Activated B cell treated with CpG ODN at 0.5 μM for 24 hours (primary cell): ENCODE measurements at regions of chr6 and their contacts with region 1.

Region 1: GRCh38 chr6:33271458-33272274 is at the starts of genes RPS18 and VPS52:
- DNase-seq: peak; percentile 79
- ATAC-seq: peak; percentile 84
- H3K4me3 Mint-ChIP-seq: peak within 1 kb of the TSS; percentile 100
- H3K27ac Mint-ChIP-seq: peak within 1 kb of the TSS; percentile 100
- H3K4me1 Mint-ChIP-seq: peaks cover 59% of the 10 kb centered on the region
- H3K27me3 Mint-ChIP-seq: no peaks in the 10 kb centered on the region
- CTCF ChIP-seq: no peak
- total RNA-seq, gene RPS18: 4,710 and 5,877 TPM in 2 replicates
- total RNA-seq, gene VPS52: 82.0 and 97.2 TPM in 2 replicates

Region 2: DNA sequence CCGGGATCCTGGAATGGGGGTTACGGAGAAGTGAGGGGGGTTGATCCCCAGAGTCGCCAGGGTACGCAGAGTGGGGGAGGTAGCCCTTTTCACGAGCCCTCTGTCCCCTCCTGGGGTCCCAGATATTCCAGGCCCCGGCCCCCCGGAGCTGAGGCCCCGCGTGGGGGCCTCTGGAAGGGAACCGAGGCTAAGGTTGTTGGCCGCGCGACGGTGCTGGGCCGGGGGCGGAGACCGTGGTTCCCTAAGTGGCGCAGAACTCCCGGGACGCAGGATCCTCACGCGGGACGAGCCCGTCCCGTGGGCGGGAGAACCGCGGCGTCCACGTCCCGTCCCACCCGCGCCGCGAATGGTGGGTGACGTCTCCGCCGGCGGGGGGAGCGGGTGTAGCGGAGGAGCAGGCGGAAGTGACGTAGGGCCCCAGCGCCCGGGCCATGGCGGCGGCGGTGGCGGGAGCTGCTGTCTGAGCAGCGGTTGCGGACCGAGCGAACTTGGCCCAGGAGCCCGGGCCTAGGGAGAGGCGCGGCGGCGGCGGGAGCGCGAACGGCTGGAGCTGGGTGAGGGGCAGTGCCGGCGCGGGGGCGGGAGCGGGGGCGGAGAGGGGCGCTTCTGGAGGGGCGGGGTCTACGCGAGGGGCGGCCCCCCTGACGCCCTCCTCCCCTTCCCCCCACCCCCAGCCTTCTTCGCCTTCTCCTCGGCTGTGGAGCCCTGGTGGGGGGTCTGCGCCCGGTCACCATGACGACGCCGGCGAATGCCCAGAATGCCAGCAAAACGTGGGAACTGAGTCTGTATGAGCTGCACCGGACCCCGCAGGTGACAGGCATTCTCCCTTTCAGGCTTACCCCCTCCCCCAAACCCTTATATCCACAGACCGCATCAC is 63.3 kb before region 1 on chr6 and contains the start of gene RING1:
- CTCF ChIA-PET with region 1: no interaction called
- POLR2A ChIA-PET with region 1: interaction called, 38 read pairs
- intact Hi-C with region 1: loop called (anchors 1 kb)
- DNase-seq: peak; percentile 88
- ATAC-seq: peak; percentile 51
- H3K4me3 Mint-ChIP-seq: peak within 1 kb of the TSS; percentile 87
- H3K27ac Mint-ChIP-seq: peak within 1 kb of the TSS; percentile 82
- H3K4me1 Mint-ChIP-seq: peaks cover 45% of the 10 kb centered on the region
- H3K27me3 Mint-ChIP-seq: peaks cover 13% of the 10 kb centered on the region
- CTCF ChIP-seq: no peak
- total RNA-seq, gene RING1: 41.7 and 43.8 TPM in 2 replicates

Region 3: GRCh38 chr6:33288921-33289748 is 17.5 kb after region 1 on chr6 and contains the starts of genes PFDN6 and WDR46:
- CTCF ChIA-PET with region 1: interaction called, 21 read pairs
- POLR2A ChIA-PET with region 1: interaction called, 80 read pairs
- intact Hi-C with region 1: loop called (anchors 1 kb)
- DNase-seq: peak; percentile 66
- ATAC-seq: peak; percentile 94
- H3K4me3 Mint-ChIP-seq: peak within 1 kb of the TSS; percentile 100
- H3K27ac Mint-ChIP-seq: peak within 1 kb of the TSS; percentile 95
- H3K4me1 Mint-ChIP-seq: peaks cover 48% of the 10 kb centered on the region
- H3K27me3 Mint-ChIP-seq: no peaks in the 10 kb centered on the region
- CTCF ChIP-seq: no peak
- total RNA-seq, gene PFDN6: 82.8 and 95.1 TPM in 2 replicates
- total RNA-seq, gene WDR46: 114 and 117 TPM in 2 replicates

Region 4: DNA sequence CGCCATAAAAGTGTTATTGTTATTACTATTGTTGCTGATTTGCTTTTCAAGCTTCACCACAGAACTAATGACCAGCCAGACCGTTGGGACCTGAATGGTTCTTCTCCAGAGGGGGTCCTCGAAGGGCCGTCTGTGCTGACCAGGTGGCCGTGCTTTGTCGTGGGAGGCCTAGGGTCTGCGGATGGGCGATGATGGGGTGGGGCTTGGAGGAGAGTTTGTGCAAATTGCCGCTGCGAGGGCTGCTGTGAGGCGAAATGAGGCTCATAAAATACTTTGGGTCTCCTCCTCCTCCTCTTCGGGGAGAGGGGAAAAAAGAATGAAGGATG is 51.9 kb after region 1 on chr6:
- CTCF ChIA-PET with region 1: no interaction called
- POLR2A ChIA-PET with region 1: interaction called, 41 read pairs
- intact Hi-C with region 1: loop called (anchors 1 kb)
- DNase-seq: peak; percentile 38
- ATAC-seq: no peak
- H3K4me3 Mint-ChIP-seq: peak overlapping the region; percentile 95
- H3K27ac Mint-ChIP-seq: peak overlapping the region; percentile 93
- H3K4me1 Mint-ChIP-seq: peaks cover 61% of the 10 kb centered on the region
- H3K27me3 Mint-ChIP-seq: no peaks in the 10 kb centered on the region
- CTCF ChIP-seq: no peak

Region 5: GRCh38 chr6:33410050-33410710 is 138.5 kb after region 1 on chr6:
- CTCF ChIA-PET with region 1: no interaction called
- POLR2A ChIA-PET with region 1: interaction called, 18 read pairs
- intact Hi-C with region 1: no loop called
- DNase-seq: peak; percentile 93
- ATAC-seq: peak; percentile 74
- H3K4me3 Mint-ChIP-seq: peak overlapping the region; percentile 88
- H3K27ac Mint-ChIP-seq: peak overlapping the region; percentile 87
- H3K4me1 Mint-ChIP-seq: peaks cover 47% of the 10 kb centered on the region
- H3K27me3 Mint-ChIP-seq: no peaks in the 10 kb centered on the region
- CTCF ChIP-seq: no peak

Region 6: DNA sequence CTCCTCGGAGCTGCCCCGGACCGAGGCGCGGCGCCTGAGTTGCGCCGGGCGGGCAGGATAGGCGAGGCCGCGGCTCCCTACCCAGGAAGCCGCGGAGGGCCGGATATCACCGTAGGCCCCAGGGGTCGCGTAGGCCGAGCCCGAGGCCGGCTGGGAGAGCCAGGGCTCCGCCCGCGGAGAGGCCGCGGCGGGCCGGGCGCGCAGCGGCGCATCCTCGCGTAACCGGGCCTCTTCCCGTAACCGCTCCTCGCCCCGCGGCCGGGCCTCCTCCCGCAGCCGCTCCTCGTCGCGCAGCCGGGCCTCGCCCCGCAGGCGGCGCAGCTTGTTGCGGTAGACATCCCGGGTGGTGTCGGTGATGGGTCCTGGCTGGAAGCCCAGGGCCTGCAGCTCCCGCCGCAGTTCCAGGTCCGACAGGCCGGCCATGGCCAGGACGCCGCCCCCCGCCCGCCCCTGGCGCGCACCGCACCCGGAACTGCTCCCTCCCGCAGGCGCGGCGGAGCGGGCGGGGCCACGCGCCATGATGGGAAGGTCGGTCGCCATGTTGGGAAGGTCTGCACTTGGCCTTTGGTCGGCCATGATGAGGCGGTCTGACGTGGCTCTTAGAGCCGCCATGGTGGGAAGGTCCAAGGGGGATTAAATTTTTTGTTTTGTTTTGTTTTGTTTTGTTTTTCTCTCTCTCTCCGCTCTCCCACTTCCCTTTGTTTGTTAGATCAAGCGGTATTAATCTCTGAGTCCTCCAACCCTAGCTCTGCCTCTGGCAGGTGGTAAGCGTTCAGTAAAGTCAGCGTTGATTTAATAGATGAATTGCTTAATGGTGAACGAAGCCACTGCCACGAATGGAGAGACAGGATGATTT is 517.3 kb after region 1 on chr6 and contains the start of gene LEMD2:
- CTCF ChIA-PET with region 1: no interaction called
- POLR2A ChIA-PET with region 1: no interaction called
- intact Hi-C with region 1: loop called (anchors 5 kb)
- DNase-seq: peak; percentile 96
- ATAC-seq: peak; percentile 92
- H3K4me3 Mint-ChIP-seq: peak within 1 kb of the TSS; percentile 94
- H3K27ac Mint-ChIP-seq: peak within 1 kb of the TSS; percentile 94
- H3K4me1 Mint-ChIP-seq: peaks cover 46% of the 10 kb centered on the region
- H3K27me3 Mint-ChIP-seq: no peaks in the 10 kb centered on the region
- CTCF ChIP-seq: no peak
- total RNA-seq, gene LEMD2: 73.7 and 88.0 TPM in 2 replicates